ENCODE measurements at regions of chr12 and their contacts with region 1.

Region 1: DNA sequence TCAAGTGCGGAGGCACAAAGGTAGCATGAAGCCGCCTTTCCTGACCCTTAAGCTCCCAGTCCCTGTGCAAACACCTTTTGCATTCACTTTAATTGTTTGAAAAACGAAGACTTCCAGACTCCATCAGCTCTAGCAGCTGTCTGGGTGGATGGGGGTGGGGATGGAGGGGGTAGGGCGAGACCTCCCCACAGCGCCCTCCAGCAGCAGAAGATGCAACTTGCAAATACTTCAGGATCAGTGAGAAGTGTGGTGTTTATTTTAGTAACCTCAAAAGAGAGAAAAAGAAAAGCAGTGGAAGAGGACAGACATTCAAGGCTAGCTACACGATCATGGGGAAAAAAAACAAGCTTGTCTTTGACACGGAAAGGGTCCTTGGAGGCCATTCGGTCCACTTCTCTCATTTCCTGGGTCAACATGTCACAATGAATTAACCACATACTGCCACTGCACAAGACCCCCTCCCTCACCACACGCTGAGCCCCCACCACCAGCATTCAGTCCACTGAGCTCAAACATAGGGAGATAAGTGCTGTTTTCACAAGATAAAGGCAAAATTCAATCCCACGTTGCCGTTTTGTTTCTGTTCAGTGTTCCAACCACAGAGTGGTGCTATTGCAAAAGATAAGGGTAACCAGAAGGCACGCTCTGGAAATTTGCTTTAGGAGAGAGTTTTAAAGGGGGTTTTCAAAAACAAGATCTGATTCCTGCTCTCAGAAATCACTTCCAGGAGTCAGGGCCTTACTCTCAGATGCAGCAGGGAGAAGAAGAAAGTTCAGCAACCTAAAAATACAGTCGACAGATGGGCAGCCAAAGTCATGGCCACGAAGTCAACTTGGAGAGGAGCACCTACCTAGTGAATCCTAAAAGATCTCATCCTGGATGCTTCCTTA is 3.3 kb upstream of the NTF3 start:
- DNase-seq: peak; percentile 52
- ATAC-seq: peak; percentile 16
- H3K4me3 Mint-ChIP-seq: no peak overlapping the region
- H3K27ac Mint-ChIP-seq: no peak overlapping the region
- H3K4me1 Mint-ChIP-seq: peaks cover 38% of the 10 kb centered on the region
- H3K27me3 Mint-ChIP-seq: no peaks in the 10 kb centered on the region; the same call in 1 of the 2 replicates
- CTCF ChIP-seq: no peak; the same call in none of the 2 replicates

Region 2: DNA sequence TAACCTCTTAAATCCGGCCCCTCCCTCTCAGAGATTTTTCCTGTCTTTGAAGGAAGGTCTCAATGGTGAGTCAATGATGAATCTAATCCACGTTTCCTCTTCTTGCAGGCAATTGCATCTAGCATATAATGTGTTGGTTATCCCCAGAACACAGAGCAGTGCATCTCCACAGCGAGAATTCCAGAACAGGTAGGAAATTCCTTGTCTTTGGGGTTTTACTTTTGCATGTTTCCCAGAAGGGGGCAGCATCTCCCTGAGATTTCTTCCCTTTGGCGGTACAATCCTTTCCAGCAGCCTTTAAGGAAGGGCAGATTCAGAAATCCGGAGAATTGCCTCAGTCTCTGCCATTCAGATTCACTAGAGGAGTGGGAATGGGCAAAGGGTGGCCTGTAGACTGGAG is 256.9 kb before region 1 on chr12:
- CTCF ChIA-PET with region 1: interaction called, 19 read pairs
- POLR2A ChIA-PET with region 1: no interaction called
- DNase-seq: peak; percentile 38
- ATAC-seq: peak; percentile 67
- H3K4me3 Mint-ChIP-seq: no peak overlapping the region
- H3K27ac Mint-ChIP-seq: no peak overlapping the region
- H3K4me1 Mint-ChIP-seq: peaks cover 13% of the 10 kb centered on the region
- H3K27me3 Mint-ChIP-seq: no peaks in the 10 kb centered on the region
- CTCF ChIP-seq: peak; percentile 48

Region 3: GRCh38 chr12:5200278-5201087 is 228.1 kb before region 1 on chr12:
- CTCF ChIA-PET with region 1: interaction called, 75 read pairs
- POLR2A ChIA-PET with region 1: interaction called, 3 read pairs
- DNase-seq: peak; percentile 90
- ATAC-seq: peak; percentile 80
- H3K4me3 Mint-ChIP-seq: no peak overlapping the region
- H3K27ac Mint-ChIP-seq: no peak overlapping the region
- H3K4me1 Mint-ChIP-seq: peaks cover 43% of the 10 kb centered on the region
- H3K27me3 Mint-ChIP-seq: no peaks in the 10 kb centered on the region
- CTCF ChIP-seq: peak; percentile 64

Region 4: DNA sequence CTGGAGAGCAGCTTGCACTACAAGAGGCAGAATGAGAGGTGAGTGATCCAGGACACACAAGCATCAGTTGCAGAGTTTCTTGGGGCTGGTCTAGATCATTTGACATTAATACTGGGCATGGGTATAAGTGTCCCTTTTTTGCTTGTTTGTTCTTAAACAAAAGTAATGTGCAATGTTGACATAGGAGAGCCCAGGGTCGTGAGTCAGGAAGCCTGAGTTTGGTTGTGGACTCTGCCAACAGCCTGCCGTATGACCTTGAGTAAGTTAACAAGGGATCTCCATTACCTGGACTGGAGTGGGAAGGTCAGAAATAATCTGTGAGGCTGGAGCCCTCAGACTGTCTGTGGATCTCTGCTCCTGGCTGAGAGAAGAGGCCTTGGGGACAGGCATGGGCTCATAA is 214.6 kb before region 1 on chr12:
- CTCF ChIA-PET with region 1: interaction called, 10 read pairs
- POLR2A ChIA-PET with region 1: no interaction called
- DNase-seq: no peak
- ATAC-seq: no peak
- H3K4me3 Mint-ChIP-seq: no peak overlapping the region
- H3K27ac Mint-ChIP-seq: no peak overlapping the region
- H3K4me1 Mint-ChIP-seq: no peaks in the 10 kb centered on the region
- H3K27me3 Mint-ChIP-seq: peaks cover 10% of the 10 kb centered on the region
- CTCF ChIP-seq: no peak

Region 5: GRCh38 chr12:5294274-5295070 is 134.1 kb before region 1 on chr12:
- CTCF ChIA-PET with region 1: no interaction called
- POLR2A ChIA-PET with region 1: no interaction called
- DNase-seq: no peak
- ATAC-seq: no peak
- H3K4me3 Mint-ChIP-seq: no peak overlapping the region
- H3K27ac Mint-ChIP-seq: no peak overlapping the region
- H3K4me1 Mint-ChIP-seq: peaks cover 29% of the 10 kb centered on the region
- H3K27me3 Mint-ChIP-seq: no peaks in the 10 kb centered on the region
- CTCF ChIP-seq: no peak

Region 6: DNA sequence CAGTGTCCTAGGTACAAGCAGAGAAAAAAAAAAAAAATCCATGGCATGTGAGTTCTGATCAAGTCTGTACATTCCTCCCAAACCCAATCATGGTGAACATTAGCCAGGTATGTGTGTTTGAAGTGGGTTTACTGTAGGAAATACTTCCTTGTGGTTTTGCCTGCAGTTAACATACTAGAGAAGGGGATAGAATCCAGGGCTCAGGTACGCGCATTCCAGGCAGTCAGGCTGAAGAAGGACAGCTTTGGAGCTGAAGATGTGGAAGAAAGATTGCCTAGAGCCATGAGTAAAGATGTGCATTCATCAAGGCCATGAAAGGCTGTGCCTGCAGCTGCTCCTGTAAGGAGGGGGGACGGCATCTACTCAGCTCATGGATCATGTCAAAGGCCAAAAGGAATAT is 84.9 kb before region 1 on chr12:
- CTCF ChIA-PET with region 1: no interaction called
- POLR2A ChIA-PET with region 1: no interaction called
- DNase-seq: no peak
- ATAC-seq: no peak
- H3K4me3 Mint-ChIP-seq: no peak overlapping the region
- H3K27ac Mint-ChIP-seq: no peak overlapping the region
- H3K4me1 Mint-ChIP-seq: peaks cover 7% of the 10 kb centered on the region; the same call in 1 of the 2 replicates
- H3K27me3 Mint-ChIP-seq: no peaks in the 10 kb centered on the region; the same call in 1 of the 2 replicates
- CTCF ChIP-seq: no peak

Region 7: GRCh38 chr12:5442251-5443006 is 13.9 kb after region 1 on chr12:
- CTCF ChIA-PET with region 1: interaction called, 29 read pairs
- POLR2A ChIA-PET with region 1: no interaction called
- DNase-seq: peak; percentile 31
- ATAC-seq: peak; percentile 86
- H3K4me3 Mint-ChIP-seq: no peak overlapping the region
- H3K27ac Mint-ChIP-seq: no peak overlapping the region
- H3K4me1 Mint-ChIP-seq: peaks cover 17% of the 10 kb centered on the region
- H3K27me3 Mint-ChIP-seq: no peaks in the 10 kb centered on the region
- CTCF ChIP-seq: no peak

Region 8: DNA sequence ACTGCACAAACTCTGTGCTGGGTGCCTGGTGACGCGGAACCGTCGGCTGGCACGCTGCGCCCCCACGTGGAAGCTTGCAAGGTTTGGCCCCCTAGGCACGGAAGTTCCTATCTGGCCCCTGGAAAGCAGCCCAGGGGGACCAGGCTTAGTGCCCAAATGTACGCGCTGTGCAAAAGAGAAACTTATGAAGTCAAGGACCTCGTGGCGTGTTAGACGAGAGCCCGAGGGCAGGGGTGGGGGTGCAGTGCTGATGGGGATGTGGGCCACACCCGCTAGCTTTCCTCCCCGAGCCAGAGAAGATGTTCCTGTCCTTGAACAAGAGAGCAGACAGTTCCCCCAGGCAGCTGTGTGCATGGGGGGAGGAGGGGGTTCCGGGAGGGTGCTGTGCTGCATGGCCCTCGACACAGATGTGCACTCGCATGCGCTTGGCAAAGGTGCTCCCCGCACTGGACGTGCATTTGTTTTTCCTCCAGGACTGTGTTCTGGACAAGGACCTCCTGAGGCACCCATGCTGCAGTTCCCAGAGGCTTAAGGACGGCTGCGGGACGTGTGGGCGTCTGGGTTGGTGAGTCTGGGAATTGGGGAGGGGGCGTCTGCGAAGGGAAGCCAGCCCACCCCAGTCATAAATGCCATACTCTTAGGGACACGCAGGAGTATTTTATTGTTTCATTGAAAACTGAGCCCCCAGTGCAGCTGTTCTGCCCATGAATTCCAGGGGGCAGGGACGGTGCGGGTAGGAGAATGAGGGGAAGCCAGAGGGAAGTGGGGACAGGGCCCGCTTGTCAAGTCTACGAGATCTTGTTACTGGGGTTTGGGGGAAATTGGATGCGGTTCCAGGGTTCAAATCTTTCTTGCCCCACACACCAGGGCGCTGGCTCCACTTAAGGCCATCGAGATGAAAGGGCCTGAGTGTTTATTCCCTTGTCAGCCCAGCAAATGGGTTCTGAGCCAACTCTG is 83.3 kb after region 1 on chr12:
- CTCF ChIA-PET with region 1: interaction called, 29 read pairs
- POLR2A ChIA-PET with region 1: no interaction called
- DNase-seq: peak; percentile 65
- ATAC-seq: peak; percentile 69
- H3K4me3 Mint-ChIP-seq: no peak overlapping the region
- H3K27ac Mint-ChIP-seq: no peak overlapping the region
- H3K4me1 Mint-ChIP-seq: peaks cover 33% of the 10 kb centered on the region
- H3K27me3 Mint-ChIP-seq: no peaks in the 10 kb centered on the region; the same call in 1 of the 2 replicates
- CTCF ChIP-seq: peak; percentile 34; the same call in 1 of the 2 replicates

Region 9: DNA sequence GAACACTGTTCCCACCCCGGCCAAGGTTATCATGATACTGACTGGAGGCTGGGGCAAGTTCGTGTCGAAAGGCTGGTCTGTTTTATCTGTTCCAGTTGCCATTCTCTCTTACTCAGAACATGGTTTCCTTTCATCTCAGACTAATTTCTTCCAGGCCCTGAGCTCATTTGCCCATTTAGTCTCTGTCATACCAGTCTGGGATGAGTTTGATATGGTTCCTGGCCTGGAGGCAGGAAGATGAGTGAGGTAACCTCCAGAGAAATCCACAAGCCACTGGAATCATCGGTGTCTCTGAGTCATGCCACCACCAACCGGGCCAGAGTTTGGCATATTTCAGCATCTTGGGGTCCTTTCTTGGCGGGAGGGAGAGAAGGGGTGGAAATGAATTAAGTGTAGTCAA is 118.0 kb after region 1 on chr12:
- CTCF ChIA-PET with region 1: no interaction called
- POLR2A ChIA-PET with region 1: no interaction called
- DNase-seq: no peak
- ATAC-seq: no peak
- H3K4me3 Mint-ChIP-seq: no peak overlapping the region
- H3K27ac Mint-ChIP-seq: no peak overlapping the region
- H3K4me1 Mint-ChIP-seq: peaks cover 7% of the 10 kb centered on the region
- H3K27me3 Mint-ChIP-seq: no peaks in the 10 kb centered on the region; the same call in 1 of the 2 replicates
- CTCF ChIP-seq: no peak

Region 10: GRCh38 chr12:5648692-5649359 is 220.2 kb after region 1 on chr12:
- CTCF ChIA-PET with region 1: interaction called, 17 read pairs
- POLR2A ChIA-PET with region 1: no interaction called
- DNase-seq: peak; percentile 48
- ATAC-seq: peak; percentile 99
- H3K4me3 Mint-ChIP-seq: no peak overlapping the region
- H3K27ac Mint-ChIP-seq: no peak overlapping the region; the same call in 1 of the 2 replicates
- H3K4me1 Mint-ChIP-seq: peaks cover 11% of the 10 kb centered on the region
- H3K27me3 Mint-ChIP-seq: no peaks in the 10 kb centered on the region
- CTCF ChIP-seq: peak; percentile 34